GM12878 (cell line): ENCODE measurements at regions of chr7 and their contacts with region 1.

Region 1: GRCh38 chr7:134632937-134633540 is 13.6 kb upstream of the BPGM start:
- DNase-seq: no peak
- ATAC-seq: peak; percentile 76
- H3K4me3 ChIP-seq: no peak overlapping the region
- H3K27ac ChIP-seq: no peak overlapping the region
- H3K4me1 ChIP-seq: peaks cover 16% of the 10 kb centered on the region
- H3K27me3 ChIP-seq: no peaks in the 10 kb centered on the region
- CTCF ChIP-seq: peak; percentile 63 to 80 (median 76)
- EP300 ChIP-seq: no peak
- POLR2A ChIP-seq: no peak
- RAD21 ChIP-seq: peak; percentile 92

Region 2: GRCh38 chr7:134432296-134433152 is 200.5 kb before region 1 on chr7:
- CTCF ChIA-PET with region 1: interaction called, 14 read pairs
- POLR2A ChIA-PET with region 1: no interaction called
- RAD21 ChIA-PET with region 1: interaction called, 10 read pairs
- SMC1A ChIA-PET with region 1: interaction called, 8 read pairs
- in situ Hi-C with region 1: no loop called
- intact Hi-C with region 1: no loop called
- DNase-seq: peak; percentile 69
- ATAC-seq: peak; percentile 98
- H3K4me3 ChIP-seq: peak overlapping the region; percentile 65; the same call in 1 of the 2 replicates
- H3K27ac ChIP-seq: no peak overlapping the region
- H3K4me1 ChIP-seq: peaks cover 5% of the 10 kb centered on the region
- H3K27me3 ChIP-seq: no peaks in the 10 kb centered on the region
- CTCF ChIP-seq: peak; percentile 53 to 91 (median 73)
- EP300 ChIP-seq: no peak
- POLR2A ChIP-seq: no peak
- RAD21 ChIP-seq: peak; percentile 95

Region 3: GRCh38 chr7:134646425-134647305 is 13.6 kb after region 1 on chr7 and contains the start of gene BPGM:
- CTCF ChIA-PET with region 1: interaction called, 107 read pairs
- POLR2A ChIA-PET with region 1: interaction called, 78 read pairs
- RAD21 ChIA-PET with region 1: interaction called, 81 read pairs
- SMC1A ChIA-PET with region 1: interaction called, 124 read pairs
- in situ Hi-C with region 1: no loop called
- intact Hi-C with region 1: no loop called
- DNase-seq: peak; percentile 100
- ATAC-seq: peak; percentile 98
- H3K4me3 ChIP-seq: peak within 1 kb of the TSS; percentile 85
- H3K27ac ChIP-seq: peak within 1 kb of the TSS; percentile 75
- H3K4me1 ChIP-seq: 0 out of 2 replicates have a peak, but pooled peaks cover 3% of the 10 kb centered on the region
- H3K27me3 ChIP-seq: no peaks in the 10 kb centered on the region
- CTCF ChIP-seq: peak; percentile 37 to 48 (median 47)
- EP300 ChIP-seq: peak in 1 of 2 experiments; percentile 50; a peak in 1 of 4 replicates
- POLR2A ChIP-seq: peak; percentile 99
- RAD21 ChIP-seq: no peak
- polyA plus RNA-seq, gene BPGM: 18.4 to 20.1 TPM

Region 4: DNA sequence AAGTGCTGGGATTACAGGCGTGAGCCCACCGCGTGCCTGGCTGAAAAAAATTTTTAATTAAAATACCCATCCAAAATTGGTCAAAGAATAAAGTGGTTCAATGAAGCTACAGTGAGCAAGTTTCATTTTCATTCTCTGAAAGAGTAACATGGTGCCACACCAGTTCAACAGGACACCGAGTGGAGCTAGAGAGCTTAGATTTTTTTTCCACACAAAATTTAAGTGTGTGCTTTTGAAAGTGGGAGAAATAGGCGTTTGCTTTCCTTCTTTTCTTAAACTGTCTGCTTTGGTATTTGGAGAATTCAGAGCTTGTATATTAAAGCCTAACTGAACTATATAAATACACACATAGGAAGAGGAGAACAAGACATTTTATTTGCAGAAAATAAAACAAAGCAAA is 57.0 kb after region 1 on chr7:
- CTCF ChIA-PET with region 1: interaction called, 32 read pairs
- POLR2A ChIA-PET with region 1: no interaction called
- RAD21 ChIA-PET with region 1: interaction called, 15 read pairs
- SMC1A ChIA-PET with region 1: interaction called, 41 read pairs
- in situ Hi-C with region 1: no loop called
- intact Hi-C with region 1: no loop called
- DNase-seq: no peak
- ATAC-seq: peak; percentile 75
- H3K4me3 ChIP-seq: no peak overlapping the region
- H3K27ac ChIP-seq: no peak overlapping the region
- H3K4me1 ChIP-seq: no peaks in the 10 kb centered on the region
- H3K27me3 ChIP-seq: peaks cover 0 to 2% of the 10 kb centered on the region in 2 experiments; a peak in 1 of 4 replicates
- CTCF ChIP-seq: peak in 1 of 3 experiments; percentile 10; a peak in 1 of 6 replicates
- EP300 ChIP-seq: no peak
- POLR2A ChIP-seq: no peak
- RAD21 ChIP-seq: peak; percentile 41

Region 5: GRCh38 chr7:134750083-134751062 is 117.3 kb after region 1 on chr7:
- CTCF ChIA-PET with region 1: interaction called, 104 read pairs
- POLR2A ChIA-PET with region 1: interaction called, 3 read pairs
- RAD21 ChIA-PET with region 1: interaction called, 23 read pairs
- SMC1A ChIA-PET with region 1: interaction called, 25 read pairs
- in situ Hi-C with region 1: no loop called
- intact Hi-C with region 1: loop called (anchors 1 kb)
- DNase-seq: no peak
- ATAC-seq: peak; percentile 94
- H3K4me3 ChIP-seq: no peak overlapping the region
- H3K27ac ChIP-seq: no peak overlapping the region
- H3K4me1 ChIP-seq: no peaks in the 10 kb centered on the region
- H3K27me3 ChIP-seq: 0 out of 4 replicates have a peak, but pooled peaks cover 0 to 2% of the 10 kb centered on the region in 2 experiments
- CTCF ChIP-seq: peak; percentile 62 to 97 (median 86)
- EP300 ChIP-seq: no peak
- POLR2A ChIP-seq: no peak
- RAD21 ChIP-seq: peak; percentile 68

Region 6: GRCh38 chr7:134992626-134993179 is 359.7 kb after region 1 on chr7:
- CTCF ChIA-PET with region 1: interaction called, 5 read pairs
- POLR2A ChIA-PET with region 1: no interaction called
- RAD21 ChIA-PET with region 1: interaction called, 11 read pairs
- SMC1A ChIA-PET with region 1: interaction called, 5 read pairs
- in situ Hi-C with region 1: no loop called
- intact Hi-C with region 1: no loop called
- DNase-seq: peak; percentile 96
- ATAC-seq: peak; percentile 67
- H3K4me3 ChIP-seq: peak overlapping the region; percentile 32; the same call in 1 of the 2 replicates
- H3K27ac ChIP-seq: peak overlapping the region; percentile 99
- H3K4me1 ChIP-seq: peaks cover 61% of the 10 kb centered on the region
- H3K27me3 ChIP-seq: no peaks in the 10 kb centered on the region
- CTCF ChIP-seq: no peak
- EP300 ChIP-seq: peak; percentile 86 to 95
- POLR2A ChIP-seq: peak; percentile 77
- RAD21 ChIP-seq: no peak